ENCODE measurements at regions of chr3 and their contacts with region 1.

Region 1: GRCh38 chr3:46705022-46705530 is 3.9 kb downstream of the TMIE start:
- DNase-seq: peak; percentile 69
- H3K4me3 ChIP-seq: no peak overlapping the region
- H3K27ac ChIP-seq: no peak overlapping the region
- H3K4me1 ChIP-seq: peaks cover 5% of the 10 kb centered on the region
- H3K27me3 ChIP-seq: peaks cover 6% of the 10 kb centered on the region
- CTCF ChIP-seq: peak; percentile 90 to 98 (median 94)
- POLR2A ChIP-seq: no peak

Region 2: GRCh38 chr3:46629551-46630517 is 75.2 kb before region 1 on chr3:
- intact Hi-C with region 1: no loop called
- DNase-seq: peak; percentile 57
- H3K4me3 ChIP-seq: no peak overlapping the region
- H3K27ac ChIP-seq: peak overlapping the region in 1 of 2 donors; percentile 49
- H3K4me1 ChIP-seq: no peaks in the 10 kb centered on the region
- H3K27me3 ChIP-seq: no peaks in the 10 kb centered on the region
- CTCF ChIP-seq: peak; percentile 71 to 96 (median 82)
- POLR2A ChIP-seq: no peak

Region 3: GRCh38 chr3:46866720-46867549 is 161.9 kb after region 1 on chr3:
- intact Hi-C with region 1: loop called (anchors 10 kb)
- DNase-seq: peak; percentile 42
- H3K4me3 ChIP-seq: no peak overlapping the region
- H3K27ac ChIP-seq: peak overlapping the region in 1 of 2 donors; percentile 42
- H3K4me1 ChIP-seq: peaks cover 9% of the 10 kb centered on the region
- H3K27me3 ChIP-seq: no peaks in the 10 kb centered on the region
- CTCF ChIP-seq: peak; percentile 76 to 82 (median 79)
- POLR2A ChIP-seq: no peak

Region 4: DNA sequence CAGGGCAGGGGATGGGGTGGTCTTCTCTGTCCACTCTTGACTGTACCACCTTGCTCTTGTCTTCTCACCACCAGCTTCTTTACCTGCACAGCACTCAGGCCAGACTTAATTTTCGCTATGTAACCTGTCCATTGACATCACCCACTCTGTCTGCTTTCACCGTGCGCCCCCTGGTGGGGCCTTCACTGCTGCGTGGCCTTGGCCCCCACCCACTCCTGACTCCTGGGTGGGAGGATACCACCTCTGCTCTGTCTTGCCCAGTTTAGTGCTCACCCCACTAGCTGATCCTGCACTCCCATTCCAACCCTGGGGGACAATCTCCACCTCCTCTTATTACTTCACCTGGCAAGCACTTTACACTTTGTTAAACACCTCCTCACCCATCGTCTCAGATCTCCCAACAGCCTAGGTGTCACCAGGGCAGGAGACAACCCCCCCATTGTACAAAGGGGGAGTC is 190.2 kb after region 1 on chr3:
- intact Hi-C with region 1: loop called (anchors 2 kb)
- DNase-seq: peak; percentile 63
- H3K4me3 ChIP-seq: no peak overlapping the region
- H3K27ac ChIP-seq: no peak overlapping the region
- H3K4me1 ChIP-seq: peaks cover 6% of the 10 kb centered on the region
- H3K27me3 ChIP-seq: peaks cover 5% of the 10 kb centered on the region
- CTCF ChIP-seq: peak; percentile 72 to 93 (median 87)
- POLR2A ChIP-seq: no peak

Region 5: DNA sequence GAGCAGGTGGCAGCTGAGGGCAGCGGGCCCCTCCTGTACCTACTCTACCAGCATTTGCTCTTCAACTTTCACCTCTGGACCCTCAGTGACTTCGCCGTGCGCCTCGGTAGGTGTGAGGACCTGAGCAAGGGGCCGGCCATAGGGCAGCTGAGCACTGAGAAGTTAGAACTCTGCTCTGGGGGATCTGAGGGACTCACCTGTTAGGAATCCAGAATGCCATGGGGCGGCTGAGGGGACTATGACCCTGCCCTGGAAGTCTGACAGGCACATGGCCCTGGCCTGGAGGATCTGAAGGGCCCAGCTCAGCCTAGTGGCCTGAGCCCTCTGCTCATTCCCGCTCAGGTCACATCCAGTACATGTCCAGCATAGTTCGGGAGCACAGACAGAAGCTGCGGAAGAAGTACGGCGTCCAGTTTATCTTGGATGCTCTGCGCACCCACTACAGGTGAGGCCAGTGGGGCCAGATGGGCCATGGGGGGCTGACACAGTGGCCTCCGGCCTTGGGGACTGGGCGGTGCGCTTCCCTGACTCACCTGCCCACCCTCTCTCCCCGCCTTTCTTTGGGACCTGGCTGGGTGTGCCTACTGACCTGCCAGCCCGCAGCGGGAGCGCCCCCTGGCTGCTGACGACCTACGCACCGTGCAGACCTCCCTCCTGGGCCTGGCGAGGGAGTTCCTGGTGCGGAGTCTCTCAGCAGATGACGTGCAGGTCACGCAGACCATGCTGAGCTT is 293.2 kb after region 1 on chr3:
- intact Hi-C with region 1: loop called (anchors 10 kb)
- DNase-seq: peak; percentile 65
- H3K4me3 ChIP-seq: no peak overlapping the region
- H3K27ac ChIP-seq: no peak overlapping the region
- H3K4me1 ChIP-seq: no peaks in the 10 kb centered on the region
- H3K27me3 ChIP-seq: no peaks in the 10 kb centered on the region
- CTCF ChIP-seq: peak; percentile 62 to 93 (median 87)
- POLR2A ChIP-seq: no peak

Region 6: DNA sequence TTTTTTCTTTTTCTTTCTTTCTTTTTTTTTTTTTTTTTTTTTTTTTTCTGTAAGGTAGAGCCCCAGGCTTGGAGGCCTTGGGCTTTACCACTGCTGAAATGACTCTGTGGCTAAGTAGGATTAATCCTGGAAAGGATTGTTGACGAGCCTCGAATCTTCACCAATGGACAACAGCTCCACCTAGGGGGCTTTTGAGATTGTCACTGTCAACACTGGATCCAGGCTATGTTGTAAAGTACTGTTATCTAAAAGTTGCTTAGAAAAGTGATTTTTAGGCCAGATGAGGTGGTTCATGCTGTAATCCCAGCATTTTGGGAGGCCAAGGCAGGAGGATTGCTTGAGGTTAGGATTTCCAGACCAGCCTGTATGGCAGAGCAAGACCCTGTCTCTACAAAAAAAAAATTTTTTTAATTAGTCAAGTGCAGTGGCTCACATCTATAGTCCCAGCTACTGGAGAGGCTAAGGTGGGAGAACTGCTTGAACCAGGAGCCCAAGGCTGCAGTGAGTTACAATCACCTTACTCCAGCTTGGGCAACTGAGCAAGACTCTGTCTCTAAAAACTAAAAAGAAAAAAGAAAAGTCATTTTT is 619.3 kb after region 1 on chr3:
- intact Hi-C with region 1: loop called (anchors 10 kb)
- DNase-seq: peak; percentile 56
- H3K4me3 ChIP-seq: no peak overlapping the region
- H3K27ac ChIP-seq: no peak overlapping the region
- H3K4me1 ChIP-seq: no peaks in the 10 kb centered on the region
- H3K27me3 ChIP-seq: no peaks in the 10 kb centered on the region
- CTCF ChIP-seq: peak; percentile 19 to 77 (median 59)
- POLR2A ChIP-seq: no peak